HEK293 (cell line): ENCODE measurements at regions of chr1 and their contacts with region 1.

Region 1: DNA sequence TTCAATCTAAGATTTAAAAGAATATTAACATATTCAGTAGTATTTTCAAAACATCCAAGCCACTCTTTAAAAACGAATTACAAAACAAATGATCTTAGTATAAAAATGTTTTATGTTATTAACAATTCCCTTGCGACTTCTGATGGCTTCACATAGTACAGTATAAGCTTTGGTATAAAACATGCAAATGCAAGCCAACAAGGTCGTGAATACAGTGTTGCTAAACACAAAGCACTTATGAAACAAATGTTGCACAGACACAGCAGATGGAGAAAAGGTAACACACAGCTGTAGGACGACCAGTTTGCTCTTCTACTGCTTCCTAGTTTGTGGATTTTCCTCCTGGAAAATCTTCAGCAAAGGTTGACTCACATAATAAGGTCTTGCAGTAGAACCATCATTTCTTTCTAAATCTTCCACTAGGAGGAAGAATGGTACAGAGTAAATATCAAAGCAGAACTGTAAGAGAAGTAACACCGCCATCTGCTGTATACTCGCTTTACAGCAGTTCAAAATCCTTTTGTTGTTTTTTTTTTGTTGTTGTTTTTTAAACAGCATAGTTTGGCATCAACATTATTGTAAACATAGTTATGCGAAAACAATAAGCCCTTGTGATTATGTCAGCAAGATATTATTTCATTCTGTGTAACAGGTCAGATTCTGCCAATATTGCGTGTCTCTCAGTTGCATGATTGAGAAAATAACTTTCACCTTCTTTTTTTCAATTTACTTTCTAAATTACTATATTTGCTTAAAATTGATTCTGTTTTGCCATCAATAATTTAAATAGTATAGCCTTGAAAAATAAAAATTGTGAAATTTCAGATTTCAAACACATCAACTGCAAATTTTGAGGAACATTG is 69.5 kb downstream of the LHX8 start:
- H3K4me3 ChIP-seq: no peak overlapping the region
- H3K27ac ChIP-seq: no peak overlapping the region
- H3K4me1 ChIP-seq: no peaks in the 10 kb centered on the region
- CTCF ChIP-seq: peak; percentile 76

Region 2: GRCh38 chr1:74771913-74772515 is 431.6 kb before region 1 on chr1:
- CTCF ChIA-PET with region 1: interaction called, 45 read pairs
- POLR2A ChIA-PET with region 1: no interaction called
- H3K4me3 ChIP-seq: no peak overlapping the region
- H3K27ac ChIP-seq: no peak overlapping the region
- H3K4me1 ChIP-seq: no peaks in the 10 kb centered on the region
- CTCF ChIP-seq: no peak; the same call in 1 of the 2 replicates

Region 3: GRCh38 chr1:75053207-75053606 is 150.4 kb before region 1 on chr1:
- CTCF ChIA-PET with region 1: interaction called, 16 read pairs
- POLR2A ChIA-PET with region 1: no interaction called
- H3K4me3 ChIP-seq: no peak overlapping the region
- H3K27ac ChIP-seq: no peak overlapping the region
- H3K4me1 ChIP-seq: no peaks in the 10 kb centered on the region
- CTCF ChIP-seq: no peak